ENCODE measurements at regions of chr6 and their contacts with region 1.

Region 1: GRCh38 chr6:163427498-163428254 is 13.2 kb downstream of the QKI start:
- DNase-seq: no peak
- H3K4me3 ChIP-seq: no peak overlapping the region
- H3K27ac ChIP-seq: no peak overlapping the region
- H3K4me1 ChIP-seq: peaks cover 27 to 88% of the 10 kb centered on the region in 2 donors
- H3K27me3 ChIP-seq: no peaks in the 10 kb centered on the region
- CTCF ChIP-seq: peak in 5 of 6 experiments; percentile 53 to 74 (median 58)
- POLR2A ChIP-seq: no peak

Region 2: DNA sequence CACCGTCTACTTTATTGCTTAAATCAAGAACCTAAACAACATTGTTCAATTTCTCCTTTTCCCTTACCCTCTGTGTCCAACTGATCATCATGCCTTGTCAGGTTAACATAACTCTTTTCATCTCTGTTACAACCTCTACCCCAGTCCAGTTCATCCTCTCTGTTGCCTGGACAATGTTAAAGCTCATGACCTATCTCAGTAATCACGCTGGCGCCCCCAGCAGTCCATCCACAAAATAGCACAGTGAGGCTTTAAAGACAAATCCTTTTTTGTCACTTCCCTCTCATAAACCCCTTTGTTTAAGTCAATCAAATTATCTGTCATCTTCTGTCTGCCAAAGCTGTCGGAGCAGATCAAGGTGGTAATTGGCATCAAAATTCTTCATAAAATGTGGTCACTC is 127.0 kb after region 1 on chr6:
- intact Hi-C with region 1: loop called in 1 of 2 experiments (anchors 5 kb)
- DNase-seq: peak in 6 of 7 donors; percentile 42 to 84 (median 68)
- H3K4me3 ChIP-seq: no peak overlapping the region
- H3K27ac ChIP-seq: no peak overlapping the region
- H3K4me1 ChIP-seq: peaks cover 0 to 3% of the 10 kb centered on the region in 2 donors
- H3K27me3 ChIP-seq: no peaks in the 10 kb centered on the region
- CTCF ChIP-seq: peak; percentile 24 to 66 (median 56)
- POLR2A ChIP-seq: no peak

Region 3: DNA sequence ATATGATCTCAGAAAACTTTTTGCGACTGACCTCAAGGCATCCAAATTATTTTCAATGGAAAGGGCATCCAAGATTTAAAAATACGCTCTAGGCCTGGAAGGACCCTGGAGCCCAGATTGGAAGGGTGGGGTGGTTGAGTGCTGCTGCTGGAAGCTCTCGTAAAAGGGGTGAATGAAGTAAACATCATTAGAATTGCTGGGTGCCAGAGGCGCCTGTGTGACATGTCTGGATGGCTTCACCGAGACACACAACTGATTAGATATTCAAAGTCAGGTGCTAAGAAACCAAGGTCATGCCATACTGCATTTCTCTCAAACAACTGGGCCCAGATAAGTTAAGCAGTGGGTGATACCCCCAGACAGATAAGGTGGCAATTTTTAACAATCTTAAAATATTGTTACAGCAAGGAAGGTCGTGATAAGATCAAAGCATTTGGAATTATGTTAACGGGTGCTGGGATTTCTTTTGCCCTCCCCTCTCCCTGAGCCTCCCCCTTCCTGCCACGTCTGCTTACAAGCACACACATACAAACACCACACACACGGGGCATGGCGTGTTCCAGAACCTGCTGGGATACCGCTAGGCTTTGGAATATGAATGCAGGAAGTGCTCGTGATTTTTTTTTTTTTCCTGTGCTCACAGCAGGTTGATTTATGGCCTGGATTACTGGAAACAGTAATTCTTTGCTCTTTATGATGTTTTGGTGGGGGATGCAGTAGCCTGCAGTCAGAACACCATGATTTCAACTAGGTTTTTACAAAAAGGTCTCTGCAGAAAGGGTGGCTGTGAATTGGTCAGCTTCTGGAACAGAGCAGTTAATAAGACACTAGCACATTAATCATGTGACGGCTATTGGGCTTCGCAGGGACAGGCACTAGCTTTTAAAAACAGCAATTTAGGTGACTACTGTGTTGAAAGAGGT is 538.0 kb after region 1 on chr6:
- intact Hi-C with region 1: loop called (anchors 10 kb)
- DNase-seq: peak in 6 of 7 donors; percentile 31 to 73 (median 36)
- H3K4me3 ChIP-seq: no peak overlapping the region
- H3K27ac ChIP-seq: peak overlapping the region in 1 of 5 donors; percentile 4
- H3K4me1 ChIP-seq: peaks cover 0 to 10% of the 10 kb centered on the region in 2 donors
- H3K27me3 ChIP-seq: peaks cover 7% of the 10 kb centered on the region
- CTCF ChIP-seq: no peak
- POLR2A ChIP-seq: no peak